ENCODE measurements at regions of chr17 and their contacts with region 1.

Region 1: GRCh38 chr17:28623696-28624095 is 9.7 kb upstream of the RSKR start:
- DNase-seq: no peak
- H3K4me3 ChIP-seq: no peak overlapping the region
- H3K27ac ChIP-seq: no peak overlapping the region
- H3K4me1 ChIP-seq: no peaks in the 10 kb centered on the region
- H3K27me3 ChIP-seq: no peaks in the 10 kb centered on the region
- CTCF ChIP-seq: no peak

Region 2: GRCh38 chr17:28576758-28577465 is 46.8 kb before region 1 on chr17 and contains the start of gene ALDOC:
- CTCF ChIA-PET with region 1: no interaction called
- POLR2A ChIA-PET with region 1: no interaction called
- intact Hi-C with region 1: loop called (anchors 5 kb)
- DNase-seq: peak; percentile 96
- H3K4me3 ChIP-seq: peak within 1 kb of the TSS; percentile 29
- H3K27ac ChIP-seq: peak within 1 kb of the TSS; percentile 1
- H3K4me1 ChIP-seq: peaks cover 12% of the 10 kb centered on the region
- H3K27me3 ChIP-seq: no peaks in the 10 kb centered on the region
- CTCF ChIP-seq: no peak
- total RNA-seq, gene ALDOC: 9.7 and 12.0 TPM in 2 replicates

Region 3: DNA sequence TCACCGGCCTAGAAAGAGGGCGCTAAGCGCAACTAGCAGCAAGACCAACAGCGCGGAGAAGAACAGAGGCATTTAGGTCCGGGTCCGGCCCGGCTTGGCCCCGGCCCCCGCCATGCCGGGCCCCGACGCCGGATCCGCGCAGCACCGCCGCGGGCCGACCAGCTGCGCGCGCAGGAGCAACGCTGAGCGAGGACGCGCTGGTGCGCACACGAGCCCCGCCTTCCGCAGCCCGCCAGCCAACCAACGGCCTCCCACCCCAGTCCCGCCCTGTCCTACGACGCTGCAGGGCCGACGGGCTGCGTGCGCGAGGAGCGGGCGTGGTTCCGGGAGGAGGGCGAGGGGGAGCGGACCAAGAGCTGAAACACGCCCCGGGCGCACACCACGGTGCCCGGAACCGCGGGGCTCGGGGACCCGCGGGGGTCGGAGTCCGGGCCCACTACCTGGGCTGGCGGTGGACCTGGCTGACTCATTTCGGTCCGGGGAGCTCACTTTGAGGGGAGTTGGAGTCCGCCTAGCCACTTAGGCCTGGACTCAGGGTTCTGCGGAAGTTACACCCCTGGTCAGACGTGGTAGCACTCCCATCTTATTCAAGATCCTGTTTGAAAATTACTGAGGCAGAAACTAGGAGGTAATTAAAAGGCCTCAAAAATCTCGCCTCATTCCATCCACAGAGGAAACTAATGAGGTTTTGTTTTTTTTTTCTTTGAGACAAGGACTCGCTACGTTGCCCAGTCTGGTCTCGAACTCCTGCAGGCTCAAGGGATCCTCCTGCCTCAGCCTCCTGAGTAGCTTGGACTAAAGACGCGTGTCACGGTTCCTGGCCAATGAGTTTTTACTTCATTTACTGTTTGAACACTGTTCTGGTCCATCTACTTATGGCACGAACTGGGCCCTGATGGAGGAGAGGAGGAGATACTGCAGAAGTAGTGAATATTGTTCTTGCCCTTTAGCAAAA is 21.6 kb after region 1 on chr17 and contains the start of gene BLTP2:
- CTCF ChIA-PET with region 1: interaction called, 10 read pairs
- POLR2A ChIA-PET with region 1: no interaction called
- intact Hi-C with region 1: no loop called
- DNase-seq: peak; percentile 98
- H3K4me3 ChIP-seq: peak within 1 kb of the TSS; percentile 97
- H3K27ac ChIP-seq: peak within 1 kb of the TSS; percentile 93
- H3K4me1 ChIP-seq: peaks cover 18% of the 10 kb centered on the region
- H3K27me3 ChIP-seq: no peaks in the 10 kb centered on the region
- CTCF ChIP-seq: no peak
- total RNA-seq, gene BLTP2: 176 and 198 TPM in 2 replicates